ENCODE measurements at regions of chr13 and their contacts with region 1.

Region 1: DNA sequence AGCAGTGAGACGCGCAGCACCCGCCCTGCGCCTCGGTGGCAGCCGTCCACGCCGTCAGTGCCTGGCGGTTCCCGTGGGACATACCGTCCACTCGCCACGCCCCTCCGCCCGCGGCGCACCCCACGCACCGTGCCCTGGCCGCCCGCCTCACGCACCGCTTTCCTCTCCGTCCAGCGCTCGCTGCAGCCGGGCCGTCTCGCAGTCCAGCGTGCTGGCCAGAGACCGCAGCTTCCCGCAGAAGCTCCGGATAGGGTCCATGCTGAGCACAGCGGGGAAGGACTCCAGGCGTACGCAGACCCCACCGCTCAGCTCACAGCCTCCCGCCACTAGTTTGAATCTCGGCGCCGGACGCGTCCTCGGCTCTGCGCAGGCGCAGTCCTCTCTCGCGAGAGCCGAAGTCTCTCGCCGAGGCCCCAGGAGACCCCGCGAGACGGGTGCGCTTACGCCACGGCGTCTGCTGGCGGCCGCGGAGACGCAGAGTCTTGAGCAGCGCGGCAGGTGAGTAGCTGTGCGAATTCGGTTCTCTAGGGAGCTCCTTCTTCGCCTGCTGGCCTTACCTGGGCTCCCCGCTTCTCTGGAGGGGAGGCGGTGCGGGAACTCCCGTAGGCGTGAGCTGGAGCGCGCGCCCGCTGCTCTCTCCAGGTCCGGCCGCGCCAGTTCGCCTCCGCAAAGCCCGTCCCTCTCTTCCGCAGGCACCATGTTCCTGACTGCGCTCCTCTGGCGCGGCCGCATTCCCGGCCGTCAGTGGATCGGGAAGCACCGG is at the starts of genes MRPL57 and SKA3:
- DNase-seq: peak; percentile 79
- ATAC-seq: peak; percentile 94
- H3K4me3 ChIP-seq: peak within 1 kb of the TSS; percentile 89
- H3K27ac ChIP-seq: peak within 1 kb of the TSS; percentile 93
- H3K4me1 ChIP-seq: no peaks in the 10 kb centered on the region
- H3K27me3 ChIP-seq: no peaks in the 10 kb centered on the region
- CTCF ChIP-seq: no peak
- EP300 ChIP-seq: 0 out of 4 replicates have a peak, but pooled peaks of 1 of the 2 experiments have one; percentile 32
- POLR2A ChIP-seq: peak; percentile 98
- RAD21 ChIP-seq: no peak
- polyA plus RNA-seq, gene MRPL57: 13.2 to 25.8 TPM
- polyA plus RNA-seq, gene SKA3: 13.5 to 15.1 TPM

Region 2: GRCh38 chr13:20940083-20940880 is 236.1 kb before region 1 on chr13:
- CTCF ChIA-PET with region 1: interaction called, 31 read pairs
- POLR2A ChIA-PET with region 1: no interaction called
- RAD21 ChIA-PET with region 1: interaction called, 16 read pairs
- SMC1A ChIA-PET with region 1: interaction called, 13 read pairs
- in situ Hi-C with region 1: loop called (anchors 5 kb)
- intact Hi-C with region 1: loop called (anchors 1 kb)
- DNase-seq: no peak
- ATAC-seq: no peak
- H3K4me3 ChIP-seq: no peak overlapping the region
- H3K27ac ChIP-seq: no peak overlapping the region
- H3K4me1 ChIP-seq: no peaks in the 10 kb centered on the region
- H3K27me3 ChIP-seq: no peaks in the 10 kb centered on the region
- CTCF ChIP-seq: no peak
- EP300 ChIP-seq: no peak
- POLR2A ChIP-seq: no peak
- RAD21 ChIP-seq: no peak

Region 3: DNA sequence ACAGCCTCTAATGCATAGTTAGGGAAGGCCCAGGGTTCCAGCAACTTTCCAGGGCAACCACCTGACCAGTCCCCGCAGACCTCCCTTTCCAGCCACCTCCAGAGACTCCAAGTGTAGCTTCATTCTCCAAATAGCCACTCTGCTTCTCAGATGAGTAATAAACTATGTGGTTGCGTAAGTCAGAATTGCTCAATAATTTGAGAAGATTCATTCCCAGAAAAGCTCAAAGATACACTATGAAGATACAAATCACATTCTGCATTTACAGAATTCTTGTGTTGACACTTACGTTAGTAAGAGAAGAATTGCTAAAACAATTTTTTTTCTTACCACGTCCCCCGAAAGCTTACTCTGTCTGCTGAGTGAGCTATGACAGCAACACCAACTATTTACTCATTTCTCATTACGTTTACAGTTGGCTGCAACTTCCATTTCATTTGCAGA is 106.8 kb before region 1 on chr13:
- CTCF ChIA-PET with region 1: no interaction called
- POLR2A ChIA-PET with region 1: no interaction called
- RAD21 ChIA-PET with region 1: no interaction called
- SMC1A ChIA-PET with region 1: no interaction called
- in situ Hi-C with region 1: no loop called
- intact Hi-C with region 1: no loop called
- DNase-seq: no peak
- ATAC-seq: no peak
- H3K4me3 ChIP-seq: no peak overlapping the region
- H3K27ac ChIP-seq: no peak overlapping the region
- H3K4me1 ChIP-seq: peaks cover 2% of the 10 kb centered on the region
- H3K27me3 ChIP-seq: no peaks in the 10 kb centered on the region
- CTCF ChIP-seq: no peak
- EP300 ChIP-seq: no peak
- POLR2A ChIP-seq: no peak
- RAD21 ChIP-seq: no peak

Region 4: GRCh38 chr13:21106089-21106488 is 70.3 kb before region 1 on chr13:
- CTCF ChIA-PET with region 1: interaction called, 11 read pairs
- POLR2A ChIA-PET with region 1: interaction called, 3 read pairs
- RAD21 ChIA-PET with region 1: interaction called, 3 read pairs
- SMC1A ChIA-PET with region 1: interaction called, 4 read pairs
- in situ Hi-C with region 1: loop called (anchors 5 kb)
- intact Hi-C with region 1: loop called (anchors 1 kb)
- DNase-seq: no peak
- ATAC-seq: no peak
- H3K4me3 ChIP-seq: no peak overlapping the region
- H3K27ac ChIP-seq: no peak overlapping the region
- H3K4me1 ChIP-seq: no peaks in the 10 kb centered on the region
- H3K27me3 ChIP-seq: no peaks in the 10 kb centered on the region
- CTCF ChIP-seq: no peak
- EP300 ChIP-seq: no peak
- POLR2A ChIP-seq: no peak
- RAD21 ChIP-seq: no peak

Region 5: GRCh38 chr13:21115231-21115630 is 61.2 kb before region 1 on chr13:
- CTCF ChIA-PET with region 1: interaction called, 11 read pairs
- POLR2A ChIA-PET with region 1: no interaction called
- RAD21 ChIA-PET with region 1: interaction called, 4 read pairs
- SMC1A ChIA-PET with region 1: interaction called, 4 read pairs
- in situ Hi-C with region 1: loop called (anchors 5 kb)
- intact Hi-C with region 1: loop called (anchors 1 kb)
- DNase-seq: no peak
- ATAC-seq: no peak
- H3K4me3 ChIP-seq: no peak overlapping the region
- H3K27ac ChIP-seq: no peak overlapping the region
- H3K4me1 ChIP-seq: no peaks in the 10 kb centered on the region
- H3K27me3 ChIP-seq: no peaks in the 10 kb centered on the region
- CTCF ChIP-seq: no peak
- EP300 ChIP-seq: no peak
- POLR2A ChIP-seq: no peak
- RAD21 ChIP-seq: no peak

Region 6: GRCh38 chr13:21164631-21165030 is 11.8 kb before region 1 on chr13:
- CTCF ChIA-PET with region 1: interaction called, 12 read pairs
- POLR2A ChIA-PET with region 1: interaction called, 9 read pairs
- RAD21 ChIA-PET with region 1: interaction called, 3 read pairs
- SMC1A ChIA-PET with region 1: interaction called, 3 read pairs
- in situ Hi-C with region 1: no loop called
- intact Hi-C with region 1: no loop called
- DNase-seq: no peak
- ATAC-seq: no peak
- H3K4me3 ChIP-seq: no peak overlapping the region
- H3K27ac ChIP-seq: no peak overlapping the region
- H3K4me1 ChIP-seq: no peaks in the 10 kb centered on the region
- H3K27me3 ChIP-seq: no peaks in the 10 kb centered on the region
- CTCF ChIP-seq: no peak
- EP300 ChIP-seq: no peak
- POLR2A ChIP-seq: no peak
- RAD21 ChIP-seq: no peak

Region 7: GRCh38 chr13:21603531-21604448 is 427.4 kb after region 1 on chr13 and contains the start of gene MICU2:
- CTCF ChIA-PET with region 1: interaction called, 3 read pairs
- POLR2A ChIA-PET with region 1: no interaction called
- RAD21 ChIA-PET with region 1: no interaction called
- SMC1A ChIA-PET with region 1: no interaction called
- in situ Hi-C with region 1: no loop called
- intact Hi-C with region 1: loop called (anchors 5 kb)
- DNase-seq: peak; percentile 81
- ATAC-seq: peak; percentile 98
- H3K4me3 ChIP-seq: peak within 1 kb of the TSS; percentile 68
- H3K27ac ChIP-seq: peak within 1 kb of the TSS; percentile 82
- H3K4me1 ChIP-seq: no peaks in the 10 kb centered on the region
- H3K27me3 ChIP-seq: no peaks in the 10 kb centered on the region; a peak in 1 of 4 replicates
- CTCF ChIP-seq: no peak
- EP300 ChIP-seq: peak; percentile 26 to 33; a peak in 1 of 4 replicates
- POLR2A ChIP-seq: peak; percentile 100
- RAD21 ChIP-seq: no peak
- polyA plus RNA-seq, gene MICU2: 17.7 to 27.8 TPM